Heart left ventricle (tissue), 16 donors: ENCODE measurements at regions of chr11 and their contacts with region 1.

Region 1: GRCh38 chr11:56841210-56841810 is 92.8 kb upstream of the OR9G4 start:
- DNase-seq: peak in 3 of 5 donors; percentile 10 to 25 (median 22)
- ATAC-seq: peak in 1 of 4 donors; percentile 66
- H3K4me3 ChIP-seq: no peak overlapping the region
- H3K27ac ChIP-seq: no peak overlapping the region
- H3K4me1 ChIP-seq: no peaks in the 10 kb centered on the region
- H3K27me3 ChIP-seq: no peaks in the 10 kb centered on the region
- CTCF ChIP-seq: peak; percentile 45 to 81 (median 70)
- POLR2A ChIP-seq: no peak

Region 2: DNA sequence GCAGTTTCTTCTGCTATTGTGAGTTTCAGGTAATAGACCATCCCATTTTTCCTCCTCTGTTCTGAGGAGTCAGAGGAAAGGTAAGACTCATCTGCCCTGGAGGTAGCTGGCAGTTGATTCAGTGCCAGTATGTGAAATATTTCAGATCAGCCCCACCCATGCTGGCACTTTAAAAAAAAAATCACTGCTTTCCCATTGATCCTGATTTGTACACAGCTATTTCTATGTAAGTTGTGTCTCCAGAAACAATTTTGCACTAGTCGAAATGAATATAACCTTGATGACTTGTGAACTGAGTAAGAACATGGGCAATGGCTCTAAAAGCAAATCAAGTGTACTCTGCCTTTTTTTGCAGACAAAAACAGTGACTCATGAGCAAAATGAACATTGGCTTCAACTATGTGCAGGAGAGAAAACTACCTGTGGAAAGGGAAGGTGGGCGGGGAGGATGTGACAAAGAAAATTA is 65.4 kb after region 1 on chr11:
- intact Hi-C with region 1: loop called in 1 of 10 experiments (anchors 10 kb)
- DNase-seq: no peak
- ATAC-seq: no peak
- H3K4me3 ChIP-seq: no peak overlapping the region
- H3K27ac ChIP-seq: no peak overlapping the region
- H3K4me1 ChIP-seq: no peaks in the 10 kb centered on the region
- H3K27me3 ChIP-seq: no peaks in the 10 kb centered on the region
- CTCF ChIP-seq: no peak
- POLR2A ChIP-seq: no peak

Region 3: GRCh38 chr11:57116654-57117053 is 275.3 kb after region 1 on chr11:
- intact Hi-C with region 1: loop called in 5 of 10 experiments (anchors 5 to 10 kb)
- DNase-seq: peak in 1 of 5 donors; percentile 31
- ATAC-seq: peak in 3 of 4 donors; percentile 42 to 63 (median 48)
- H3K4me3 ChIP-seq: no peak overlapping the region
- H3K27ac ChIP-seq: no peak overlapping the region
- H3K4me1 ChIP-seq: peaks cover 0 to under 1% (median 0%) of the 10 kb centered on the region in 12 donors
- H3K27me3 ChIP-seq: no peaks in the 10 kb centered on the region
- CTCF ChIP-seq: peak; percentile 43 to 68 (median 56)
- POLR2A ChIP-seq: no peak

Region 4: GRCh38 chr11:57124917-57125316 is 283.6 kb after region 1 on chr11:
- intact Hi-C with region 1: loop called in 6 of 10 experiments (anchors 5 to 10 kb)
- DNase-seq: no peak
- ATAC-seq: peak in 1 of 4 donors; percentile 34
- H3K4me3 ChIP-seq: no peak overlapping the region
- H3K27ac ChIP-seq: no peak overlapping the region
- H3K4me1 ChIP-seq: peaks cover 0 to 14% (median 2%) of the 10 kb centered on the region in 12 donors
- H3K27me3 ChIP-seq: peaks cover 0 to 8% (median 0%) of the 10 kb centered on the region in 9 donors
- CTCF ChIP-seq: no peak
- POLR2A ChIP-seq: no peak

Region 5: DNA sequence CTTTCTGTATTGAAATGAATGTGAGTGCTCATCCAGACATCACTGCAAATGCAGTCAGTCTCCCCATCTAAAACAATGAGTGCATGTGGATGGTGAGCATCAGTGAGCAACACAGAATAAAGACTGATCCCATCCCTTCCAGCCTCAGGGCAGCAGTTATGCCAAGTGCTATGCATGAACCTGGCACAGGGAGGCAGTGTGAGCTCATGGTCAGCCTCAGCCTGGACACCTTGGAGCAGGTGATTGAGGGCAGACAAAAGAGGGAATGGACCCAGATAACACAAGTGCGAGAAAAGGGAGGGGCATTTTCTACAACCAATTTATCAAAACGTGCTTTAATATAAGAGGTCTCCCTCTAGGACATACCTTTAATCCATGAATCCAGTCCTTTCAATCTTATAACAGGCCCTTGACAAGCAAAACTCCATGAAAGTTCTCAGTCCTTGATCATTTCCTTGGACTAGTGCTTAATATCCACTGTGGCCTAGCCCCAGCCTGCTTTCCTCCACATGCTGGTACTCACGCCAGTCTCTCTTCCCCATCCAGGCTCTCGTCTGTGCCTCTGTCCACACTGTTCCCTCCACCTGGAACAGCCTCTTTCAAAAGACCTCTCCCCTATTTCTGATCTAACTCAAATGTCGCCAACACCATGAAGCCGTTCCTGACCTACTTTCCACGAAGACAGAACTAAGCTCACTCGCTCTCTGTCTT is 289.9 kb after region 1 on chr11:
- intact Hi-C with region 1: loop called in 6 of 10 experiments (anchors 5 to 10 kb)
- DNase-seq: peak in 3 of 5 donors; percentile 29 to 35 (median 33)
- ATAC-seq: peak in 3 of 4 donors; percentile 69 to 73 (median 72)
- H3K4me3 ChIP-seq: no peak overlapping the region
- H3K27ac ChIP-seq: no peak overlapping the region
- H3K4me1 ChIP-seq: peaks cover 0 to 5% (median 0%) of the 10 kb centered on the region in 12 donors
- H3K27me3 ChIP-seq: peaks cover 0 to 3% (median 0%) of the 10 kb centered on the region in 9 donors
- CTCF ChIP-seq: peak; percentile 30 to 75 (median 64)
- POLR2A ChIP-seq: no peak

Region 6: GRCh38 chr11:57144075-57144474 is 302.8 kb after region 1 on chr11:
- intact Hi-C with region 1: loop called in 1 of 10 experiments (anchors 10 kb)
- DNase-seq: no peak
- ATAC-seq: no peak
- H3K4me3 ChIP-seq: no peak overlapping the region
- H3K27ac ChIP-seq: no peak overlapping the region
- H3K4me1 ChIP-seq: no peaks in the 10 kb centered on the region
- H3K27me3 ChIP-seq: no peaks in the 10 kb centered on the region
- CTCF ChIP-seq: no peak
- POLR2A ChIP-seq: no peak

Region 7: DNA sequence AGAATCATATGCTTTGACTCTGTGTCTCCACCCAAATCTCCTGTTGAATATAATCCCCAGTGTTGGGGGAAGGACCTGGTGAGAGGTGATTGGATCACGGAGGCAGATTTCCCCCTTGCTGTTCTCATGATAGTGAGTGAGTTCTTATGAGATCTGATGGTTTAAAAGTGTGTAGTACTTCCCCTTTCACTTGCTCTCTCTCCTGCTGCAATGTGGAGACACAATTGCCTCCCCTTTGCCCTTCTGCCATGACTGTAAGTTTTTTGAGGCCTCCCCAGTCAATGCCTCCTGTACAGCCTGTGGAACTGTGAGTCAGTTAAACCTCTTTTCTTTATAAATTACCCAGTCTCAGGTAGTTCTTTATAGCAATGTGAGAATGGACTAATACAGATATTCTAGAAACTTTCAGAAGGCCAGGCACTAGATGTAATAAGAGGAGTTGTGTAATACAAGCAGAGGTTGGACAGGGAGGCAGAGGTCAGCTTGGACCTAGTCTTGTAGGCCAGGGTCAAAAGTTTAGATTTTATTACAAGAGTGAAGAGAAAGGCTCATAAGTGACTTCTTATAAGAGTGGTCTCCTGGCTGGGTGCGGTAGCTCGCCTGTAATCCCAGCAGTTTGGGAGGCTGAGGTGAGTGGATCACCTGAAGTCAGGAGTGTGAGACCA is 746.9 kb after region 1 on chr11:
- intact Hi-C with region 1: no loop called
- DNase-seq: no peak
- ATAC-seq: no peak
- H3K4me3 ChIP-seq: no peak overlapping the region
- H3K27ac ChIP-seq: no peak overlapping the region
- H3K4me1 ChIP-seq: peaks cover 0 to 5% (median 0%) of the 10 kb centered on the region in 12 donors
- H3K27me3 ChIP-seq: peaks cover 0 to 4% (median 0%) of the 10 kb centered on the region in 9 donors
- CTCF ChIP-seq: no peak
- POLR2A ChIP-seq: no peak